ENCODE measurements at regions of chr22 and their contacts with region 1.

Region 1: GRCh38 chr22:39236321-39237317 is 8.2 kb downstream of the PDGFB start:
- DNase-seq: peak in 2 of 6 donors; percentile 31 to 52
- ATAC-seq: no peak
- H3K4me3 ChIP-seq: no peak overlapping the region
- H3K27ac ChIP-seq: no peak overlapping the region
- H3K4me1 ChIP-seq: peaks cover 13 to 39% (median 33%) of the 10 kb centered on the region in 3 donors
- H3K27me3 ChIP-seq: no peaks in the 10 kb centered on the region
- CTCF ChIP-seq: no peak

Region 2: GRCh38 chr22:39299589-39300178 is 63.1 kb after region 1 on chr22:
- intact Hi-C with region 1: loop called in 2 of 3 experiments (anchors 5 to 10 kb)
- DNase-seq: peak in 2 of 6 donors; percentile 52 to 55
- ATAC-seq: peak in 3 of 4 donors; percentile 3 to 35 (median 22)
- H3K4me3 ChIP-seq: no peak overlapping the region
- H3K27ac ChIP-seq: no peak overlapping the region
- H3K4me1 ChIP-seq: peaks cover 4 to 10% (median 7%) of the 10 kb centered on the region in 3 donors
- H3K27me3 ChIP-seq: no peaks in the 10 kb centered on the region
- CTCF ChIP-seq: no peak

Region 3: DNA sequence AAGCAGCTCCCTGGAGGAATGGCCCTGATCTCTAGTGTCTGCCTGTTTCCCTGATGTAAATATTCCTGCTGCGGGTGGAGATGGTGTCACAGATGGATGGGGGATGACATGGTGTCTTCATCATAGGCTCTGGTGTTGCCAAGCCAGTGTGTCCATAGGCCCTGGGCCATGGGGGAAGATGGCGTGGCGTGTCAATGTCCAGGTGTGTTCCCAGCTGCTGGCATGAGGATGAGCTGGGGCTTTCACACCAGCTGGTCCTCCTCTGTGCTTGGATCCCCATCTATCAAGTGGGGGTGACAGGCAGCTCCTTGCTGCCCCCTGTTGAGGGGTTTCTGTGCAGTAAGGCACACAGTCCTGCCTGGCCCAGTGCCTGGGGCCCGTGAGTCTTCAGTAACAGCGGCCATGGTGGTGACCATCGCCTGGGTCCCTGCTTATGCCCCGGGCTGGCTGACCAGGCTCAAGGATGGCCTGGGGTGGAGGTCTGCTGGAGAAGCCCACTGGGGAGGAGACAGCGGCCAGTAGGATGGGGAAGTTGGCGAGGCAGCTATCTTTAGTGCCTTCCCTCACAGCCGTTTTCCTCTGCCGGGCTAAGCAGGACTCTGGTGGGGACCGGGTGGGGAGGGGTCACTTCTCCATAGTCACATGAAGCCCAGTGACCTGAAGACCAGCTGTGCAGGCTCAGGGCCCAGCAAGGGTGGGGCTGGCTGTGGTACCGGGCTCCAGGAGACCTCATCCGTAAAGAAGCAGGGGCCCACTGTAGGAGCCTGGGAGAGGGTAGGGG is 70.2 kb after region 1 on chr22:
- intact Hi-C with region 1: loop called in 1 of 3 experiments (anchors 10 kb)
- DNase-seq: peak in 2 of 6 donors; percentile 54 to 71
- ATAC-seq: peak in 1 of 4 donors; percentile 51
- H3K4me3 ChIP-seq: no peak overlapping the region
- H3K27ac ChIP-seq: no peak overlapping the region
- H3K4me1 ChIP-seq: no peaks in the 10 kb centered on the region
- H3K27me3 ChIP-seq: no peaks in the 10 kb centered on the region
- CTCF ChIP-seq: peak in 2 of 4 donors; percentile 9 to 22

Measured in pancreas (tissue), 10 donors.